GM23248 (cell line): ENCODE measurements at regions of chr9 and their contacts with region 1.

Region 1: GRCh38 chr9:89278997-89279739 is 31.8 kb upstream of the CKS2 start:
- DNase-seq: peak; percentile 78
- H3K4me3 ChIP-seq: no peak overlapping the region
- H3K27ac ChIP-seq: no peak overlapping the region
- H3K4me1 ChIP-seq: peaks cover 8% of the 10 kb centered on the region
- H3K27me3 ChIP-seq: no peaks in the 10 kb centered on the region

Region 2: DNA sequence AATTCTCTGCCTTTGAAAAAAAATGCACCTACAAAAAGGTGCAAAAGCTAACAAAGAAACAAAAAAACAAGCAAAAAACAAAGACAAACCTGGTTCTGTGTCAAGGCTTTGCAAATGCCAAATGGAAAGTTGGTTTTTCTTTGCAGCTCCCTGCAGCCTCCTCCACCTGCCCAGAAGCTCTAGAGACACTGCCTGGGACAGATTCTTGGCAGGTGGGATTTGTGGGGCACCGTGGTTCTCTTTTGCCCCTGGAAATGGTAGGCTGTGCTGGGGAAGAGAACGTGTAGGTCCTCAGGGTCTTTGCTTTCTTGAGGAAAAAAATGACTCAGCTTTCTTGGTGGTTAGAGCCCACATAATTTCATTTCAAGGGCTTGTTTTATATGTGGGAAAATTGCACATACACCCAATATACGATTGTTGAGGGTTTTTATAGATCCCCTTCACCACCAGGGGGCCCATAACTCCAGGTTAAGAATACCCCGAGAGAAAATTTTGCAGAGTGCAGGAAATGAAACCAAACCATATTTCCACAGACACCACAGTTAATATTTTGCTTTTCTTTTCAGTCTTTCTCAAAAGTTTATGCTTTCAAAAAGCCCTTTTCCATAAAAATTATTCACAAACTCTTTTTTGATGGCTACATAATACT is 685.5 kb before region 1 on chr9:
- in situ Hi-C with region 1: loop called (anchors 10 kb)
- DNase-seq: peak; percentile 85
- H3K4me3 ChIP-seq: no peak overlapping the region
- H3K27ac ChIP-seq: no peak overlapping the region
- H3K4me1 ChIP-seq: no peaks in the 10 kb centered on the region
- H3K27me3 ChIP-seq: no peaks in the 10 kb centered on the region

Region 3: DNA sequence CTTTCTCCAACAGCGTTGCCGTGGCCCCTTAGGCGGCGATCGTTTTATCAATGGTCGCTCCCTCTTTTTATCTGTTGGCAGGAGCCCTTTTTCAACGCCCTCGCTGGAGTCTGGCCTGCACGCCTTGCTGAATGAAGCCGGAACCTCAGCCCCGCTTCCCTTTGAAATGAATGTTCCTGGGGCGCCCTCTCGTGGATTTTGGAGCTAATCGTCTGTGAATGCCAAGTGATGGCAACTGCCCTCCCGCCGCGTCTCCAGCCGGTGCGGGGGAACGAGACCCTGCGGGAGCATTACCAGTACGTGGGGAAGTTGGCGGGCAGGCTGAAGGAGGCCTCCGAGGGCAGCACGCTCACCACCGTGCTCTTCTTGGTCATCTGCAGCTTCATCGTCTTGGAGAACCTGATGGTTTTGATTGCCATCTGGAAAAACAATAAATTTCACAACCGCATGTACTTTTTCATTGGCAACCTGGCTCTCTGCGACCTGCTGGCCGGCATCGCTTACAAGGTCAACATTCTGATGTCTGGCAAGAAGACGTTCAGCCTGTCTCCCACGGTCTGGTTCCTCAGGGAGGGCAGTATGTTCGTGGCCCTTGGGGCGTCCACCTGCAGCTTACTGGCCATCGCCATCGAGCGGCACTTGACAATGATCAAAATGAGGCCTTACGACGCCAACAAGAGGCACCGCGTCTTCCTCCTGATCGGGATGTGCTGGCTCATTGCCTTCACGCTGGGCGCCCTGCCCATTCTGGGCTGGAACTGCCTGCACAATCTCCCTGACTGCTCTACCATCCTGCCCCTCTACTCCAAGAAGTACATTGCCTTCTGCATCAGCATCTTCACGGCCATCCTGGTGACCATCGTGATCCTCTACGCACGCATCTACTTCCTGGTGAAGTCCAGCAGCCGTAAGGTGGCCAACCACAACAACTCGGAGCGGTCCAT is 277.9 kb before region 1 on chr9:
- in situ Hi-C with region 1: loop called (anchors 10 kb)
- DNase-seq: peak; percentile 94
- H3K4me3 ChIP-seq: peak overlapping the region; percentile 60
- H3K27ac ChIP-seq: no peak overlapping the region
- H3K4me1 ChIP-seq: peaks cover 8% of the 10 kb centered on the region; the same call in 1 of the 2 replicates
- H3K27me3 ChIP-seq: no peaks in the 10 kb centered on the region